Aorta (tissue), 5 donors: ENCODE measurements at regions of chr12 and their contacts with region 1.

Region 1: GRCh38 chr12:63103494-63104131 is 47.4 kb downstream of the AVPR1A start:
- DNase-seq: no peak
- ATAC-seq: no peak
- H3K4me3 ChIP-seq: no peak overlapping the region
- H3K27ac ChIP-seq: no peak overlapping the region
- H3K4me1 ChIP-seq: no peaks in the 10 kb centered on the region
- H3K27me3 ChIP-seq: no peaks in the 10 kb centered on the region

Region 2: DNA sequence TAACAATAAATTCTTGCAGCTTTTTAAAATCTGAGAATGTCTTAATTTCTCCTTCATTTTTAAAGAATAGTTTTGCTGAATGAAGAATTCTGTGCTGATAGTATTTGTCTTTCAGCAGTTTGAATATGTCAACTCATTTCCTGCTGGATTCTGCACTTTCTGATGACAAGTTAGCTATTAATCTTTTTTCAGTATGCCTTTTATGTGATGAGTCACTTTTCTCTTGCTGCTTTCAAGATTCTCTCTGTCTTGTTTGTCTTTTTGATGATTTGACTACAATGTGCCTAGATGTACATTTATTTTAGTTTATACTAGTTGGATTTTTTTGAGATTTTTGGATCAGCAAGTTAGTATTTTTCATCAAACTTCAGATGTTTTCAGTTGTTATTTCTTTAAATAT is 135.3 kb after region 1 on chr12:
- intact Hi-C with region 1: no loop called
- DNase-seq: no peak
- ATAC-seq: no peak
- H3K4me3 ChIP-seq: no peak overlapping the region
- H3K27ac ChIP-seq: no peak overlapping the region
- H3K4me1 ChIP-seq: no peaks in the 10 kb centered on the region
- H3K27me3 ChIP-seq: no peaks in the 10 kb centered on the region

Region 3: GRCh38 chr12:63276537-63277365 is 173.1 kb after region 1 on chr12:
- intact Hi-C with region 1: loop called in 1 of 2 experiments (anchors 5 kb)
- DNase-seq: no peak
- ATAC-seq: no peak
- H3K4me3 ChIP-seq: no peak overlapping the region
- H3K27ac ChIP-seq: no peak overlapping the region
- H3K4me1 ChIP-seq: no peaks in the 10 kb centered on the region
- H3K27me3 ChIP-seq: no peaks in the 10 kb centered on the region

Region 4: GRCh38 chr12:63802012-63802608 is 698.5 kb after region 1 on chr12:
- intact Hi-C with region 1: loop called (anchors 5 to 10 kb)
- DNase-seq: no peak
- ATAC-seq: no peak
- H3K4me3 ChIP-seq: no peak overlapping the region
- H3K27ac ChIP-seq: no peak overlapping the region
- H3K4me1 ChIP-seq: no peaks in the 10 kb centered on the region
- H3K27me3 ChIP-seq: no peaks in the 10 kb centered on the region

Region 5: DNA sequence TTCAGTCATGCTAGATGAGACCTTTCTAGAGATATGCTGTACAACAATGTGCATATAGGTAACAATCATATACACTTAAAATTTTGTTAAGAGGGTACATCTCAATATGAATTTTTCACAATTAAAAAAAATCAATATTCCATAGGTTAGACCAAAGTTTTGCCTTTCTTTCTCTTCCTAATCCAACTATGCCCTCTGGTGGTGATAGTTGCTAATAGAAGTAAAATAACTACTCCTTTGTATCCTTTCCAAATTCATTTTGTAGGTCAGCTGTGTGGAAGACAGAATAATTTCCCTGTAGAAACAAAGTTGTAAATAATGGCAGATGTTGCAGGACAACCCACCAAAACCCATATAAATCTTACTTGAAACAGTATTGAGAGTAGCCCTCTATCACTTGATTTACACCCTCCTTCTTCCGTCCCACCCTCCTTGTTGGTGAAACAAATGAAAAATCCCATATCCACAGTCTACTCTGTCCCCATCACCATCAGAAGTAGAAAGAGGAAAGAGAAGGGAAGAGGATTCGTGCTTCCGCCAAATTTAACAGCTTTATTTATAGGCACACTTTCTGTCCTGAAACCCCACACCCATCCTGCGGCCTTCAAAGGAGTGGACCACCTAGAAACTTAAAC is 1152.7 kb after region 1 on chr12:
- intact Hi-C with region 1: loop called in 1 of 2 experiments (anchors 5 kb)
- DNase-seq: no peak
- ATAC-seq: no peak
- H3K4me3 ChIP-seq: no peak overlapping the region
- H3K27ac ChIP-seq: no peak overlapping the region
- H3K4me1 ChIP-seq: no peaks in the 10 kb centered on the region
- H3K27me3 ChIP-seq: no peaks in the 10 kb centered on the region